PC-3 (cell line): ENCODE measurements at regions of chr17 and their contacts with region 1.

Region 1: DNA sequence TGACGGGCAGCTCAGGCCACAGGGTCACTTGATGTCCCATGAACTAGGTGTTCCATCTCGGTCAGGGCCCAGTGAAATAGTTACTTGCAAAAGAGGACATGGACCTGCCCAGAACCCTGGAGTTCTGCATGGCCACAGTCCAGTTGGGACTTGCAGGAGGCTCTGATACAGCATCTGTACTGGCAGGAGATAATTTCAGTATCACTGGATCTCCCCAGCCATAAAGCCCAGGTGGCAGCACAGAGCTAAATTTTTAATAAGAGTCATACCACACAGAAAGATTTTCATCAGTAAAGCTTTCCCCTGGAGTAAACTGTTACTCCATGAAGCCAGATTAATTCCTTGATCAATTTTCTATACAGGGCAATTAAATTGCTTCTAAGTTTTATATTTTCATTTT is 18.0 kb upstream of the SLC16A5 start:
- DNase-seq: peak; percentile 83
- ATAC-seq: peak; percentile 91
- H3K4me3 ChIP-seq: no peak overlapping the region
- H3K27ac ChIP-seq: no peak overlapping the region
- H3K4me1 ChIP-seq: no peaks in the 10 kb centered on the region
- H3K27me3 ChIP-seq: no peaks in the 10 kb centered on the region
- CTCF ChIP-seq: peak; percentile 86

Region 2: DNA sequence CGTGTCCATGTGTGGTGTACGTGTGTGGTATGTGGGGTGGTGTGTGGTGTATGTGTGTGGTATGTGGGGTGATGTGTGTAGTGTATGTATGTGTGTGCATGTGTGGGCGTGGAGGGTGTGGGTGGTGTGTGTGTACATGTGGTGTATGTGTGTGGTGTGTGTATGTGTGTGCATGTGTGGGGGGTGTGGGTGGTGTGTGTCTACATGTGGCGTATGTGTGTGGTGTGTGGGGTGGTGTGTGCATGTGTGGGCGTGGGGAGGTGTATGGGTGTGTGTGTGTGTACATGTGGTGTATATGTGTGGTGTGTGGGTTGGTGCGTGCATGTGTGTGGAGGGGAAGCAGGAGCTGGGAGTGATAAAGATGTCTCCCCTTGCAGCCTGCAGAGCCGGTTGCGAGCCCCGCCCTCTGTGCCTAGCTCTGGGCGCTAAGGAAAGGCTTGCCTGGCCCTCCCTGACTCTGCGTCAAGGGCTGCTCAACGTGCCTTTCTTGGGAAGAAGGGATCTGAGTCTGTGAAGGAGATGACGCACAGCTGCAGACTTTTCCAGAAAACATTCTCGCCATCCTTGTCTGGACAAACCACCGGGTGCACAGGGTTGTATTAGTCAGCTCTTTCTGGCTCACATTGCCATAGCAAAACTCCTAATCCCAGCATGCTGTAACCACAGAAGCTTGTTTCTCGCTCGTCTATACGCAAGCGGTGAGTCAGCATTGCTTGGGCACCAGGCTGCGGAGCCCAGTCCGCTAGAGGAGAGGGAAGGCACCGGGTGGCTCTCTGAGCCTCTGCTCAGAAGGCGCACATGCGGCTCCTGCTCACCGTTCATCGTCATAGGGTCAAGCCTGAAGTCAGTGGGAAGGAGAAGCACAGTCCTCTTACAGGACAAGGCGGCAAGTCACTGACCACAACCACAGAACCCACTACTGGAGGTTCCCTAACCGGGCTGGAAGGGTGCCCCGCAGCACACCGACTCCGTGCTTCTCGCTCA is 500.5 kb before region 1 on chr17:
- CTCF ChIA-PET with region 1: no interaction called
- POLR2A ChIA-PET with region 1: no interaction called
- intact Hi-C with region 1: no loop called
- DNase-seq: peak; percentile 99
- ATAC-seq: peak; percentile 97
- H3K4me3 ChIP-seq: no peak overlapping the region
- H3K27ac ChIP-seq: peak overlapping the region; percentile 88
- H3K4me1 ChIP-seq: peaks cover 14% of the 10 kb centered on the region
- H3K27me3 ChIP-seq: peaks cover 30% of the 10 kb centered on the region
- CTCF ChIP-seq: no peak

Region 3: DNA sequence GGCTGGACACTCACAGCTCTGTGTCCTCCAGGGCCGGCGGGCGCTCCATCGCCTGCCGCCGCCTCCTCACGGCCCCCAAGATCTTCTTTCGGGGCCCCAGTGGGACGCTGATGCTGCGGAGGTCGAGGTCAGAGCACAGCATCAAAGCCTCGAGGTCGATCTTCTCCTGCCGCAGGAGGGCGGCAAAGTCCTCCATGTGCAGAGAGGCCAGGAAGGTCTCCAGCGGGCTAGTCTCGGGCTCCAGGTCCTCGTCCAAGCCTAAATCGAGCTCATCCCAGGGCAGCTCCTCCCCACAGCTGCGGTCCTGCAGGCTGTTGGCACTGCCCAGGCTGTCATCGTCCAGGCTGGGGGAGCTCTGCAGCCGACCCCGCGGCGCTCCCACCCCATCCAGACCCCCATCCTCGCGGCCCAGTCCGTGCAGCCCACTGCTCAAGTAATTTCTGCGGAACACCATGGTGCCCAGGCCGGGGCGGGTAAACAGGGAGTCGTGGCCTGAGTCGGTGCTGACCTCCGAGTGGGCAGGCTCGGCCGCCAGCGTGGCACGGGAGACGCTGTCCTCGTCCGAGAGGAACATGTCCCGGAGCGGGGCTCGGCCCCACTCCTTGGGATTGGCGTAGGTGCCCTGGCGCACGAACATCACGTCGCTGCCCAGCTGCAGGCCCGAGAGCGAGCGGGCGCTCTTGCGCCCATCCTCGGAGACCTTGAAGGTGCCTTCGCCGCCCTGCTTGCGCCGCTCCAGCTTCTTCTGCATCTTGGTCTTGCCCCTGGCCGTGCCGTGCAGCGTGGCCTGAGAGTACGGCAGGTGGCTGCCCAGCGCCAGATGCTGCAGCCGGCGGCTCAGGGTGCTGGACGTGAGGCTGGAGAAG is 150.1 kb before region 1 on chr17:
- CTCF ChIA-PET with region 1: no interaction called
- POLR2A ChIA-PET with region 1: no interaction called
- intact Hi-C with region 1: no loop called
- DNase-seq: no peak
- ATAC-seq: no peak
- H3K4me3 ChIP-seq: no peak overlapping the region
- H3K27ac ChIP-seq: no peak overlapping the region
- H3K4me1 ChIP-seq: no peaks in the 10 kb centered on the region; the same call in 1 of the 2 replicates
- H3K27me3 ChIP-seq: peaks cover 23% of the 10 kb centered on the region
- CTCF ChIP-seq: no peak

Region 4: DNA sequence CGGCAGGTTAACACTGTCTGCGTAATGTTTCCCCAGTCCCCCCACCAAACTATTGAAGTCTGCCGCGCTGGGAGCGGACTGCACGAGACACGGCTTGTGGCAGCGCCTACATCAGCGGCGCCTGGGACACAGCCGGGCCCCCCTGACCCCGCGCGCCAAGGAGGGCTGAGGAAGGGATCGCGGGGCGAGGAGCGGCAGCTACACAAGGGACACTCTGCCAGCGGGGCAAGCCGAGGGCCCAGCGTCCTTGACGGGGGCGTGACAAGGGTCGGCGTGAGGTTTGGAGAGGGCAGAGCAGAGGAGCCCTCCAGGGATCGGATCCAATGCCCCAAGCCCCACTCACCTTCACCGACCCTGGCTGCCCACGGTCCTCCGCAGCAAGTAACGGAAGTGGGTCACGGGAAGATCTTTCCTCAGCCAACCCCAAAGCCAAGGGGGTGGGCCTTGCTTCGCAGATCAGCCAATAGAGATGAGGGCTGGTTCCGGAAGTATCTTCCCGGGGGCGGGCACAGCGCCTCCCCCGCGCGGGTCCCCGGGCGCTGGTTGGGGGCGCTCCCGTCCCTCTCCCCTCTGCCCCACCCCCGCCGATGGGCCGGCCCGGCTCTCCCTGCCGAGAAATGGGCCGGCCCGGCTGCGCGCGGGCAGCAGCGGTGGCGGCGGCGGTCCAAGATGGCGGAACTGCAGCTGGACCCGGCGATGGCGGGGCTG is 23.0 kb before region 1 on chr17 and contains the starts of genes ATP5PD and KCTD2:
- CTCF ChIA-PET with region 1: interaction called, 3 read pairs
- POLR2A ChIA-PET with region 1: interaction called, 30 read pairs
- intact Hi-C with region 1: no loop called
- DNase-seq: peak; percentile 99
- ATAC-seq: peak; percentile 92
- H3K4me3 ChIP-seq: peak within 1 kb of the TSS; percentile 99
- H3K27ac ChIP-seq: peak within 1 kb of the TSS; percentile 79
- H3K4me1 ChIP-seq: peaks cover 13% of the 10 kb centered on the region
- H3K27me3 ChIP-seq: no peaks in the 10 kb centered on the region
- CTCF ChIP-seq: no peak
- total RNA-seq, gene ATP5PD: 361 and 374 TPM in 2 replicates
- total RNA-seq, gene KCTD2: 23.8 and 28.0 TPM in 2 replicates